ENCODE measurements at regions of chr7 and their contacts with region 1.

Region 1: GRCh38 chr7:142788303-142789289 is 17.8 kb downstream of the PRSS2 start:
- DNase-seq: peak in 3 of 10 donors; percentile 14 to 17 (median 16)
- ATAC-seq: no peak
- H3K4me3 Mint-ChIP-seq: peak overlapping the region; percentile 86 to 99 (median 96)
- H3K27ac Mint-ChIP-seq: peak overlapping the region; percentile 96 to 100 (median 100)
- H3K4me1 Mint-ChIP-seq: peaks cover 10 to 64% (median 27%) of the 10 kb centered on the region in 4 donors
- H3K27me3 Mint-ChIP-seq: no peaks in the 10 kb centered on the region

Region 2: DNA sequence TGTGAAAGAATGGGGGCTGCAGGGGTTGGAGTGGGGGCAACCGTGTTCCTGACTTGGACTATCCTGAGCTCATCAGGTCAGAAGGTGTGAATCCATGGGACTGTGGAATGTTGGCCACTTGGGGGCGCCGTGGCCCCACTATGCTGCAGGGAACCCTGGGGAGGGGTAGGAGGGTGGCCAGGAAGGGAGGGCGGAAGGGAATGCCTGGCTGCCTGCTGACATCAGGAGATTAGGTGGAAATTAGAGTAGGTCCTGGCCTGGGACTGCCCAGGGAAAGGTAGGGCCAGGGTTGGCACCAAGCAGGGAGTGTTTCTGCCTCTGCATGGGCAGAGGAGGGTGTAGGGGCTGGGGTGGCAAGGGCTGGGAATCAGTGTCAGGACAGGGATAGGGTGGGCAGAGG is 464.9 kb before region 1 on chr7:
- POLR2A ChIA-PET with region 1: interaction called, 12 read pairs
- DNase-seq: peak in 5 of 10 donors; percentile 29 to 67 (median 36)
- ATAC-seq: peak; percentile 48 to 55
- H3K4me3 Mint-ChIP-seq: peak overlapping the region in 3 of 10 donors; percentile 12 to 75 (median 33)
- H3K27ac Mint-ChIP-seq: peak overlapping the region in 9 of 10 donors; percentile 9 to 91 (median 52)
- H3K4me1 Mint-ChIP-seq: peaks cover 17 to 20% (median 18%) of the 10 kb centered on the region in 4 donors
- H3K27me3 Mint-ChIP-seq: peaks cover 2 to 41% (median 6%) of the 10 kb centered on the region in 5 donors

Region 3: DNA sequence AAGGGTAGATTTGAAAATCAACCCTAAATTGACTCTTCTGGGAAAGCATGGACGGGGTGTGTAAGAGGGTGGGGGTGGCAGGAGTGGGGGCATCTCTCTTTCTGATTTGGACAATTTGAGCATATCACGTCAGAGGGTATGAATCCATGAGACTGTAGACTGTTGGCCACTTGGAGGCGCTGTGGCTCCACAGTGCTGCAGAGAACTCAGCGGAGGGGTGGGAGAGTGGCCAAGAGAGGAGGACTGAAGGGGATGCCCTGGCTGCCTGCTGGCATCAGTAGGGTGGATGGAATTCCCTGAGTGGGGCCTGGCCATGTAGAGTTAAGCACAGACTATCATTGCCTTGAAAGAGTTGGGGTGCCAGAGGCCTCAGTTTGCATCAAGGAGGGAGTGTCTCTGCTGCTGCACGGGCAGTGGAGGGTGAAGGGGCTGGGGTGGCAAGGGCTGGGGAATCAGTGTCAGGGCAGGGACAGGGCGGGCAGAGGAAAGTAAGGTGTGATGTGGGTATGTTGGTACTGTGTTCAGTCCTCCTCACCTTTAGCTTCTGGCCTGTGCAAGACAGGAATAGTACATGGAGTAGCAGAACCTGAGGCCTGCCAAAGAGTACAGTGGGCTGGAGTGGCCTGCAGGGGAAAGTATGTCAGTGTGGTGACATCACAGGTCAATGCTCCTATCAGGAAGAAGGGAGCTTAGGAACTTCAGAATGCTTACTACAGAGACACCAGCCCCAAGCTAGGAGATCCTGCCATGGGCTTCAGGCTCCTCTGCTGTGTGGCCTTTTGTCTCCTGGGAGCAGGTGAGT is 397.2 kb before region 1 on chr7:
- POLR2A ChIA-PET with region 1: interaction called, 15 read pairs
- DNase-seq: peak in 9 of 10 donors; percentile 20 to 67 (median 40)
- ATAC-seq: peak; percentile 83 to 85
- H3K4me3 Mint-ChIP-seq: peak overlapping the region; percentile 29 to 84 (median 63)
- H3K27ac Mint-ChIP-seq: peak overlapping the region; percentile 25 to 71 (median 61)
- H3K4me1 Mint-ChIP-seq: peaks cover 0 to 7% (median 3%) of the 10 kb centered on the region in 4 donors
- H3K27me3 Mint-ChIP-seq: peaks cover 0 to under 1% (median 0%) of the 10 kb centered on the region in 5 donors

Region 4: GRCh38 chr7:142615508-142615907 is 173.1 kb before region 1 on chr7:
- POLR2A ChIA-PET with region 1: interaction called, 10 read pairs
- DNase-seq: no peak
- ATAC-seq: peak in 1 of 2 donors; percentile 29
- H3K4me3 Mint-ChIP-seq: peak overlapping the region; percentile 38 to 82 (median 70)
- H3K27ac Mint-ChIP-seq: peak overlapping the region; percentile 41 to 92 (median 76)
- H3K4me1 Mint-ChIP-seq: peaks cover 0 to 8% (median 0%) of the 10 kb centered on the region in 4 donors
- H3K27me3 Mint-ChIP-seq: peaks cover 0 to 6% (median 3%) of the 10 kb centered on the region in 5 donors

Region 5: GRCh38 chr7:142711746-142712619 is 76.6 kb before region 1 on chr7:
- POLR2A ChIA-PET with region 1: interaction called, 85 read pairs
- DNase-seq: peak in 3 of 10 donors; percentile 15 to 44 (median 29)
- ATAC-seq: peak; percentile 76 to 82
- H3K4me3 Mint-ChIP-seq: peak overlapping the region; percentile 84 to 94 (median 90)
- H3K27ac Mint-ChIP-seq: peak overlapping the region; percentile 89 to 96 (median 95)
- H3K4me1 Mint-ChIP-seq: peaks cover 10 to 79% (median 61%) of the 10 kb centered on the region in 4 donors
- H3K27me3 Mint-ChIP-seq: no peaks in the 10 kb centered on the region